Prostate gland (tissue), 2 donors: ENCODE measurements at regions of chr19 and their contacts with region 1.

Region 1: DNA sequence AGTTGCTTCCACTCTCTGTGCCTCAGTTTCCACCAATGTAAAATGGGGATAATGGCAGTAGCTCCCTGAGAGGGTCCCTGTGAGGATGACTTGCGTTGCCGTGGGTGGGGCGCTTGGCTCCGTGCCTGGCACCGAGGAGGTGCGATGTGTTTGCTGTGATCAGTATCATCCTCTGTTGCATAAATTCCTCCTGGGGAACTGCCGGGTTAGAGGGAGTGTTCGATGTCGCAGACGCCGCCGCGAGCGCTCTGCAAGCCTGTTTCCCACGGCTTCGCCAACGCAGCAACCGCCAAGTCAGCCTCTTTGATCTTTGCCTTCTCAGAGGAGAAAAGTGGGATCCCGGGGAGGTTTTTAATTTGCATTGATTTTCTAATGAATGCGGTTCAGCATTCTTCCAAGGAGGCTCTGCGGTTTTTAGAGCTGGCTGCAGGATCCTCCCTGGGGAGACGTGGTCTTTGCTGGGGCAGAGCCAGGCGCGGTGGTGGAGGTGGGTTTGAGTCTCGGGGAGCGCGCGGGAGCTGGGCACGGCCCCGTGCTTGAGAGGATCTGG is 7.6 kb downstream of the GPR32 start:
- DNase-seq: no peak
- H3K4me3 ChIP-seq: no peak overlapping the region
- H3K27ac ChIP-seq: no peak overlapping the region
- H3K4me1 ChIP-seq: no peaks in the 10 kb centered on the region
- H3K27me3 ChIP-seq: peaks cover 12% of the 10 kb centered on the region
- CTCF ChIP-seq: no peak
- POLR2A ChIP-seq: no peak

Region 2: DNA sequence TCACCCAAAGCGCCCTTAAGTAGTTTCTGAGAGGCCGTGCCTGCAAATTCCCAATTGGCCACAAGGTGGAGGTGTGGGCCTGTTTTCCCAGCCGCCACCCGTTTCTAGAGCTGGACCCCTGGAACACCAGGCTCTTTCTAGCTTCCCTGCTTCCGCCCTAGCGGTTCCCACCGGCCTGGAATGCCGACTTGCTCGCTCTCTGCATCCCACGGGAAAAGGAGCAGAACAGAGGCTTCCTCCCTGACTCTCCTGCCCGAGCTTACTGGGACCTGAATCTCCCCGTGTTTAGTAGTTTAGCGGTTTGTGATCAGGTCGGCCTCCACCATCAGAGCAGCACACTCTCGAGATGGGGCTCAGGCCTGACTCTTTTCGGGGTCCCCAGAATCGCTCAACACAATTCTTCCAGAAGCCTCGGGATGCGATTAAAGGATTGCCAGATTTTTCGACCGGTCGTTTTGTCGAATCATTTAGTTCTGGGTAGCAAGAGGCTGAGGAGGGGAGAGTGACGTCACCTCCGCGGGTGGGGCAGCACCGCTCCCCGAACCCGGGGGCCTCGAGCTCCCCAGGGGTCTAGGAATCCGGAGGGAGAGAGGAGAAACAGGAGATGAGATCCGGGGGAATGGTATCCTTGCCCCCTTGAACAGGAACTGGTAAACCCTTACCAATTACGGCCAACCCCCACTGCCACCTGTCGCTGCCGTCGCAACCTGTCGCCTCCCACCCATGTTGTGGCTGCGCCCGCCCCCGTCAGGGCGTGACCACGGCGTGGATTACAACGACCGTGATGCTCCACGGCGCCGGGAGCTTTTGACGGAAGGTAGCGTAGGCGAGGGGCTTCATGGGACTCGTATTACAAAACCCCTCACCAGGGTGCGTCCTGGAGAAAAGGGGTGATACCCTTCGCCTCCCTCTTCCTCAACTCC is 420.4 kb before region 1 on chr19:
- intact Hi-C with region 1: loop called (anchors 2 kb)
- DNase-seq: peak; percentile 62
- H3K4me3 ChIP-seq: peak overlapping the region; percentile 29 to 35
- H3K27ac ChIP-seq: peak overlapping the region; percentile 71 to 79
- H3K4me1 ChIP-seq: no peaks in the 10 kb centered on the region
- H3K27me3 ChIP-seq: no peaks in the 10 kb centered on the region
- CTCF ChIP-seq: peak; percentile 75 to 92 (median 84)
- POLR2A ChIP-seq: no peak

Region 3: DNA sequence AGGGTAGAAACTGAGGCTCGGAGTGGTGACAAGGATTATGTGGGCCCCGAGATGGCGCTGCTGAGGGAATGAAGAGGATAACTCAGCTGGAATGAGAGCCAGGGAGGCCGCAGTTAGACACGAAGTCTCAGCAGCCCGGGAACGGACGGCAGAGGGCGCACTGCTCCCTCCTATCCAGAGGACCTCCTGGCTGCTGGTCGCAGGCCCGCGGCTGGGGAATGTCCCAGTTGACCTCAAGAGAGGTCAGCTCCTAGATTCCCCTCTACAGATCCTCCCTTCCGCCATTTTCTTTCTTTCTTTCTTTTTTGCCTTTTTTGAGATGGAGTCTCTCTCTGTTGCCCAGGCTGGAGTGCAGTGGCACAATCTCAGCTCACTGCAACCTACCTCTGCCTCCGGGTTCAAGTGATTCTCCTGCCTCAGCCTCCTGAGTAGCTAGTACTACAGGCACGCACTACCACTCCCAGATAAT is 240.0 kb before region 1 on chr19:
- intact Hi-C with region 1: loop called (anchors 5 kb)
- DNase-seq: peak; percentile 43
- H3K4me3 ChIP-seq: no peak overlapping the region
- H3K27ac ChIP-seq: no peak overlapping the region
- H3K4me1 ChIP-seq: no peaks in the 10 kb centered on the region
- H3K27me3 ChIP-seq: no peaks in the 10 kb centered on the region
- CTCF ChIP-seq: peak in 3 of 4 experiments; percentile 45 to 54 (median 50)
- POLR2A ChIP-seq: no peak

Region 4: DNA sequence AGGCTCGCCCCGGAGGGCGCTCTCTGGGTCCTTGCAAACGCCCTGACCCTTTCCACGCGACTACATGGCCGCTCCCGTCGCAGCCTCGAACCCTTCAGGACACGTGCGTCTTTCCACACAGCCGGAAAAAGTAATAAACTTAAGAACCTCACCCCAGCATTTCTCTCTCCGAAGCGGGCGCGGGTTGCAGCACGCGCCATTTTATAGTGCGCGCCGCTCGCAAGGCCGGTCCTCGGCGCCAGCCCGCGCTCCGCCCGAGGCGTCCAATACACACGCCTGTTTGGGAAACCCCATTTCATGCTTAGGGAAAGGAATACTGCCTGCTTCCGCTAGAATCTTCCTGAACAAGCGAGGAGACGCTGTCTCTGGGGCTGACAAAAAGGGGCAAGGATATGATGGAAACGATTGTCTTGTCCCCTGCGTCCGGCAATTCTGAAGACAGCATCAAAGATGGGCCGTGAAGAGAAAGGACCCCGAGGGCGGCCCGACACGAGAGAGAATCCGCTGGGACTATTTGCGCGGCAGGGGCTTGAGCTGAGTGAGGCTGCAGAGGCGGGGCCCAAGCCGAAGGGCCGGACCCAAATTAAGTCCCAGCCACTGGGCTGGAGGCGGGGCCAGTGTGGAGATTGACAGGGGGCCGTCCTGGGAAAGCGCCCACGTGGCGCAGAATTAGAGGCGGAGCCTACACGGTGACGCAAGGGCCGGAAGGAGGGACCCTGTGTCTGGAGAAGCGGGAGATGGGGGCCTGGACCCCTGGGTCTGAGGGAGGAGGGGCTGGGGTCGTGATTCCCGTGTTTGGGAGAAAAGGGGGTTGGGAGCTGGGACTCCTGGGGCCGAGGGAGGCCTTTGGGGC is 26.8 kb after region 1 on chr19:
- intact Hi-C with region 1: no loop called
- DNase-seq: peak; percentile 99
- H3K4me3 ChIP-seq: peak overlapping the region; percentile 76 to 92
- H3K27ac ChIP-seq: peak overlapping the region; percentile 93 to 96
- H3K4me1 ChIP-seq: peaks cover 5% of the 10 kb centered on the region
- H3K27me3 ChIP-seq: no peaks in the 10 kb centered on the region
- CTCF ChIP-seq: peak in 2 of 4 experiments; percentile 16 to 26
- POLR2A ChIP-seq: peak; percentile 62